ENCODE measurements at regions of chr13 and their contacts with region 1.

Region 1: DNA sequence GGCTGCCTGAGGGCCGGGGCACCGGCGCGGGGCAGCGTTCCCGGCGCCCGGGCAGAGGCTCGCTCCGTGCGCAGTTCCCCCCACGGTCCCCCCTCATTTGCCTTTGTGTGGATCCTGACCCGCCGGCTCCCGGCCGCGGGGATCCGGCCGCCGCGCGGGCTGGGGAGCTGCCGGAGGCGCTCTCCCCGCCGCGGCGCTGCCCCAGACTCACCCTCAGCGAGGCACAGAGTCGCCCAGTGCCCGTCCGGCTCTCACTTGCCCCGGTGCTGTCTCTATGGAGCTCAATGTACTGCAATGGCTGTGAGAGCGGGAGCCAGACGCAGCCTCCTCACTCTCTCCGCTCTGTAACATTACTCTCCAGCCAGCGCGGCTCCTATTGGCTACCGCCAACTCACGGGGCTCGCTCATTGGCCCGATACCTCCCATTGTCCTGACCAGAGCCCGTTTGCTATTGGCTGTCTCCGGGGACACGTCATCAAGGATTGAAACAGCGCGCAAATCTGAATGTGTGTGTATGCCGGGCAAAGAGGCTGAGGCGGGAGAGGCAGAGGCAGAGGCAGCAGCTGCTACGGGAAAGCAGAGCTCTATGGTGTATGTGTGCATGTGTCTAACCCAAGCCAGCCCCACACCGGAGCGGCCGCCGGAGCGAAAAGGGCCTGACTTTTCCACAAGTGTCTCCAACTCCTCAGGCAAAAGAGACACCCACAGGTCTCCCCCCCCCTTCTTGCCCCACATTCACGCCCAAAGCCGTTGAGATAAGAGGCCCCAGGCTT is at the start of gene HMGB1:
- DNase-seq: peak; percentile 82
- ATAC-seq: peak; percentile 96
- H3K4me3 ChIP-seq: peak within 1 kb of the TSS; percentile 58 to 66
- H3K27ac ChIP-seq: peak within 1 kb of the TSS; percentile 82
- H3K4me1 ChIP-seq: peaks cover 6% of the 10 kb centered on the region
- H3K27me3 ChIP-seq: no peaks in the 10 kb centered on the region
- CTCF ChIP-seq: no peak
- total RNA-seq, gene HMGB1: 386 TPM

Region 2: GRCh38 chr13:30572859-30573275 is 107.1 kb after region 1 on chr13:
- CTCF ChIA-PET with region 1: no interaction called
- POLR2A ChIA-PET with region 1: no interaction called
- in situ Hi-C with region 1: no loop called
- intact Hi-C with region 1: loop called (anchors 10 kb)
- DNase-seq: no peak
- ATAC-seq: peak; percentile 80
- H3K4me3 ChIP-seq: peak overlapping the region; percentile 33 to 53
- H3K27ac ChIP-seq: peak overlapping the region; percentile 92
- H3K4me1 ChIP-seq: peaks cover 18% of the 10 kb centered on the region
- H3K27me3 ChIP-seq: no peaks in the 10 kb centered on the region
- CTCF ChIP-seq: peak; percentile 59; the same call in 1 of the 2 replicates

Region 3: GRCh38 chr13:30617315-30618185 is 151.8 kb after region 1 on chr13 and contains the start of gene USPL1:
- CTCF ChIA-PET with region 1: no interaction called
- POLR2A ChIA-PET with region 1: no interaction called
- in situ Hi-C with region 1: no loop called
- intact Hi-C with region 1: loop called (anchors 10 kb)
- DNase-seq: peak; percentile 78
- ATAC-seq: peak; percentile 97
- H3K4me3 ChIP-seq: peak within 1 kb of the TSS; percentile 83 to 94
- H3K27ac ChIP-seq: peak within 1 kb of the TSS; percentile 97
- H3K4me1 ChIP-seq: peaks cover 13% of the 10 kb centered on the region
- H3K27me3 ChIP-seq: no peaks in the 10 kb centered on the region
- CTCF ChIP-seq: no peak
- total RNA-seq, gene USPL1: 19.5 TPM

Measured in Panc1 (cell line).